ENCODE measurements at regions of chr20 and their contacts with region 1.

Region 1: GRCh38 chr20:8389381-8390036 is 257.4 kb downstream of the PLCB1 start:
- DNase-seq: peak; percentile 9
- H3K4me3 ChIP-seq: no peak overlapping the region
- H3K27ac ChIP-seq: no peak overlapping the region
- H3K4me1 ChIP-seq: no peaks in the 10 kb centered on the region
- H3K27me3 ChIP-seq: no peaks in the 10 kb centered on the region
- CTCF ChIP-seq: peak; percentile 35 to 40

Region 2: DNA sequence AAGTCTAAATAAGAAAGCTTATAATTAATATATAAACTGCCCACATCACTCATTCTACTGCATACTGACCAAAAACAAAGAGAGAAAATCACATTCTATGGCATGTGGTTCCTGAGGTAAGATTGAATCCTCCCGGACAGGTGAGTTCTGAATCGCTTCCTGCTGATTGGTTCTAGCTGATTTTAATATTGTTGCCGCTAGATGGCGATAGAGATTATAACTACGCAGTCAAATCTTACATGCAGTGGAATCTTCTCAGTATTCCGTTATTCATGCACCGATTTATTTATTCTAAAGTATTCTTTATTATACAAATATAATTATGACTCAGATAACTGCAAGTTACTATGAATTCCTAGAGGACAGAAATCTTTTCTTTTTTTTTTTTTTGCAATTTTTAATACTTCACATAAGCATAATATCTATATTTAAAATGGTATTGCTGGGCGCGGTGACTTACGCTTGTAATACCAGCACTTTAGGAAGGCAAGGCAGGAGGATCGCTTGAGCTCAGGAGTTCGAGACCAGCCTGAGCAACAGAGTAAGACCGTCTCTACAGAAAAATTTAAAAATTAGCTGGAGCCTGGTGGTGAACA is 345.7 kb before region 1 on chr20:
- CTCF ChIA-PET with region 1: no interaction called
- dilution Hi-C with region 1: no loop called
- in situ Hi-C with region 1: no loop called
- intact Hi-C with region 1: loop called (anchors 2 kb)
- DNase-seq: peak; percentile 53
- H3K4me3 ChIP-seq: no peak overlapping the region
- H3K27ac ChIP-seq: no peak overlapping the region
- H3K4me1 ChIP-seq: no peaks in the 10 kb centered on the region
- H3K27me3 ChIP-seq: peaks cover 6% of the 10 kb centered on the region
- CTCF ChIP-seq: peak; percentile 60 to 65

Region 3: GRCh38 chr20:8131598-8132483 is 257.7 kb before region 1 on chr20 and contains the start of gene PLCB1:
- CTCF ChIA-PET with region 1: no interaction called
- dilution Hi-C with region 1: no loop called
- in situ Hi-C with region 1: loop called in 1 of 2 experiments (anchors 10 kb)
- intact Hi-C with region 1: loop called (anchors 1 kb)
- DNase-seq: peak; percentile 48
- H3K4me3 ChIP-seq: peak within 1 kb of the TSS; percentile 39 to 50 (median 44)
- H3K27ac ChIP-seq: no peak within 1 kb of the TSS
- H3K4me1 ChIP-seq: peaks cover 10% of the 10 kb centered on the region
- H3K27me3 ChIP-seq: peaks cover 8% of the 10 kb centered on the region
- CTCF ChIP-seq: peak; percentile 83 to 84
- total RNA-seq, gene PLCB1: 0.31 to 3.3 TPM